ENCODE measurements at regions of chr9 and their contacts with region 1.

Region 1: DNA sequence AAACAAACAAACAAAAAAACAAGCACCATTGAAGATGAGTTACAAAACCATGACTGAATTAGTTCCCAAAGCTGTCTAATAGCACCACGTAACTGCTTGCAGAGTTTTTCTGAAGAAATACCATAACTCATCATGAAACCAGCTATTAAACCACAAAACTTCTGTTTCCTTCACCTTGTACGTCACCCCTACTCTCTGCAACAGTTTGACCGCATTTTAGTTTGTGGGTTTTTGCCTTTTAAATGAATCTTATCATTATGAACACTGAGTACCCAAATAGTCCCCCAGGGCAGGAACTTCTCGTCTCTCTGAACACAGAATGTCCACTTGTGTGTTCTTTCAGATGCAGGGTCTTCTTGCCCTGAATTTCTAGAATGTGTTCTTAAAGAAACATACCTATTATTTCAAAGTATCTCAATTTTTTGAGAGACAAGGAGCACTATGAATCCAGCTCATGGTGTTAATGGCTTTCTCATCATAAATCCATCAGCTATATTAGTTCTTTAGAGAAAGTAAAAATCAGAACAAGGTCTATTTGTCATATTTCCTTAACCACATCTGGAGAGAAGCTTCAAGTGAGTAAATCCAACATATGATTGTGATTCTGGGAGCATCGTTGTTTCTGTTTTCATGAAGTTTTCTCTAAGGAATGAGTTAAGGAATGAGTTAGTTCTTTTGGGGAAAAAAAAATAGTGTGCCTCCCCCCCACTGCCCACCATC is 210.6 kb downstream of the AUH start:
- DNase-seq: peak in 8 of 9 donors; percentile 44 to 82 (median 71)
- ATAC-seq: peak; percentile 88
- H3K4me3 ChIP-seq: peak overlapping the region; percentile 17
- H3K4me3 Mint-ChIP-seq: peak overlapping the region; percentile 3 to 68 (median 50)
- H3K27ac ChIP-seq: no peak overlapping the region
- H3K27ac Mint-ChIP-seq: peak overlapping the region in 6 of 9 donors; percentile 44 to 93 (median 72)
- H3K4me1 ChIP-seq: peaks cover 17 to 24% of the 10 kb centered on the region in 2 donors
- H3K4me1 Mint-ChIP-seq: peaks cover 25 to 89% (median 35%) of the 10 kb centered on the region in 7 donors
- H3K27me3 ChIP-seq: no peaks in the 10 kb centered on the region
- H3K27me3 Mint-ChIP-seq: no peaks in the 10 kb centered on the region

Region 2: GRCh38 chr9:91036826-91037510 is 114.2 kb before region 1 on chr9:
- CTCF ChIA-PET with region 1: no interaction called
- POLR2A ChIA-PET with region 1: no interaction called
- intact Hi-C with region 1: loop called in 1 of 2 experiments (anchors 1 kb)
- DNase-seq: peak; percentile 31 to 69 (median 54)
- ATAC-seq: peak; percentile 88
- H3K4me3 ChIP-seq: no peak overlapping the region
- H3K4me3 Mint-ChIP-seq: peak overlapping the region in 9 of 10 donors; percentile 13 to 73 (median 37)
- H3K27ac ChIP-seq: no peak overlapping the region
- H3K27ac Mint-ChIP-seq: peak overlapping the region in 5 of 9 donors; percentile 13 to 38 (median 26)
- H3K4me1 ChIP-seq: peaks cover 8 to 11% of the 10 kb centered on the region in 2 donors
- H3K4me1 Mint-ChIP-seq: peaks cover 10 to 65% (median 11%) of the 10 kb centered on the region in 7 donors
- H3K27me3 ChIP-seq: no peaks in the 10 kb centered on the region
- H3K27me3 Mint-ChIP-seq: peaks cover 0 to 34% (median 14%) of the 10 kb centered on the region in 5 donors

Region 3: DNA sequence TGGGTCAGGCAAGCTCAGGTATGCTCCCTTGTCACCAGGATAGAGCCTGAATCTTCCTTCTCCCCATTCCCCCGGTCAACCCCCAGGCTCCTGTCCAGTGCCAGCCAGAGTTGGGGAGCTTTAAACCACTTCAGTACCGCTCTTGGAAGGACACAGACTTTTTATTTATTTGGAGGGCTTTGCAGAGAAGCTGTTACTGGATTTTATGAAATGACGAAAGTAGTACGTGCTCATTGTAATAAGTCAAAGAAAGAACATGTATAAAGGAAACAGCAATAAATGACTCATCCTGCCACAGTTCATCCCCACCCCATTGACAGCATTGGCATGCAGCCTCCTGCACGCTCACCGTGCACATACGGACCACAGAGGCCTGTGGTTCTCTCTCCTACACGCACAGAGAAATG is 19.7 kb before region 1 on chr9:
- CTCF ChIA-PET with region 1: no interaction called
- POLR2A ChIA-PET with region 1: no interaction called
- intact Hi-C with region 1: loop called in 1 of 2 experiments (anchors 1 kb)
- DNase-seq: peak in 1 of 9 donors; percentile 72
- ATAC-seq: peak; percentile 85
- H3K4me3 ChIP-seq: no peak overlapping the region
- H3K4me3 Mint-ChIP-seq: peak overlapping the region in 1 of 10 donors; percentile 67
- H3K27ac ChIP-seq: no peak overlapping the region
- H3K27ac Mint-ChIP-seq: peak overlapping the region in 2 of 9 donors; percentile 31 to 95
- H3K4me1 ChIP-seq: peaks cover 0 to 6% of the 10 kb centered on the region in 2 donors
- H3K4me1 Mint-ChIP-seq: peaks cover 0 to 51% (median 4%) of the 10 kb centered on the region in 7 donors
- H3K27me3 ChIP-seq: no peaks in the 10 kb centered on the region
- H3K27me3 Mint-ChIP-seq: no peaks in the 10 kb centered on the region

Region 4: GRCh38 chr9:91177661-91178280 is 26.6 kb after region 1 on chr9:
- CTCF ChIA-PET with region 1: no interaction called
- POLR2A ChIA-PET with region 1: no interaction called
- intact Hi-C with region 1: loop called in 1 of 2 experiments (anchors 1 kb)
- DNase-seq: peak in 2 of 9 donors; percentile 13 to 64
- ATAC-seq: peak; percentile 60
- H3K4me3 ChIP-seq: no peak overlapping the region
- H3K4me3 Mint-ChIP-seq: peak overlapping the region; percentile 39 to 73 (median 58)
- H3K27ac ChIP-seq: no peak overlapping the region
- H3K27ac Mint-ChIP-seq: peak overlapping the region in 8 of 9 donors; percentile 19 to 91 (median 64)
- H3K4me1 ChIP-seq: peaks cover 16 to 25% of the 10 kb centered on the region in 2 donors
- H3K4me1 Mint-ChIP-seq: peaks cover 23 to 62% (median 33%) of the 10 kb centered on the region in 7 donors
- H3K27me3 ChIP-seq: no peaks in the 10 kb centered on the region
- H3K27me3 Mint-ChIP-seq: no peaks in the 10 kb centered on the region

Region 5: DNA sequence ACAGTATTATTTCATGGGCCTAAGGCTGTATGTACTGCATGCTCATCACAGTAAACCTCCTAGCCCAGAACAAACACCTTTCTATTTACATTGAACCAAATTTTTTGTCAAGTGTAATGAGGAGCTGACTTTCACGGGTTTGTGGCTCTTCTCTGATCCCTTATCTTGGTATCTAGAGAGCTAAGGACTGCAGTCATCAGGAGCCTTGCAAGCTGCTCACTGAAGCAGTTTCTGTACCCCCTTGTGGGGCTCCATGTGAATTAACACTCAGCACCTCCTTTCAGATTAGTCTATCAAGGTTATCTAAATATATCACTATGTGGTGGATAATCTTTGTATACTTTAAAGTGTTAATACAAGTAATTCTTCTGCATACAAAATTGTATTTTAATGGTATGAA is 102.3 kb after region 1 on chr9:
- CTCF ChIA-PET with region 1: no interaction called
- POLR2A ChIA-PET with region 1: no interaction called
- intact Hi-C with region 1: loop called in 1 of 2 experiments (anchors 1 kb)
- DNase-seq: peak in 6 of 9 donors; percentile 5 to 32 (median 12)
- ATAC-seq: peak; percentile 64
- H3K4me3 ChIP-seq: no peak overlapping the region
- H3K4me3 Mint-ChIP-seq: no peak overlapping the region
- H3K27ac ChIP-seq: no peak overlapping the region
- H3K27ac Mint-ChIP-seq: peak overlapping the region in 1 of 9 donors; percentile 23
- H3K4me1 ChIP-seq: peaks cover 0 to 8% of the 10 kb centered on the region in 2 donors
- H3K4me1 Mint-ChIP-seq: peaks cover 0 to 45% (median 6%) of the 10 kb centered on the region in 7 donors
- H3K27me3 ChIP-seq: no peaks in the 10 kb centered on the region
- H3K27me3 Mint-ChIP-seq: no peaks in the 10 kb centered on the region